Dorsolateral prefrontal cortex (tissue), 120 donors: ENCODE measurements at regions of chr14 and their contacts with region 1.

Region 1: DNA sequence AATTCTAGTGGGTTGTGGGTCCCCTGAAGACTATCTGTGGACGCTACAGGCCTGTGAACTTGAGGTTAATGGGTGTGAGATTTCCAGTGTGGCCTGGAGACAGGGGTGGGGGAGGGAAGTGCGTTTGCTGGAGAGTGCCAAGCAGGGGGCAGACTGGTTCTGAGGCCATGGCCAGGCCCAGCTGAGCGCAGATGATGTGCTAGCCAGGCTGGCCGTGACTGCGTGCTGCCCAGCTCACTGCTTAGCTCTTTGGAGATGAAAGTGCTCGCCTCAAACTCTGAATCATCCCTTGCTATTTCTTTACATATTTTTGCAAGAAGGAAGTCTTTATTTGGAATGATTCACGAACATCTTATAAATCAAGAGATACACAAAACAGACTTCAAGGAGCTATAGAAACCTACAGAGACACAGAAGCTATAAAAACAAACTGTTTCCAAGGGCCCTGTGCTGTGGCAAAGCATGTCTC is 75.2 kb upstream of the PLEKHG3 start:
- DNase-seq: peak in 9 of 10 donors; percentile 57 to 73 (median 70)
- H3K4me3 ChIP-seq: peak overlapping the region in 1 of 59 donors; percentile 18
- H3K27ac ChIP-seq: peak overlapping the region in 48 of 59 donors; percentile 3 to 82 (median 55)
- H3K27me3 ChIP-seq: no peaks in the 10 kb centered on the region
- CTCF ChIP-seq: peak in 24 of 56 donors; percentile 7 to 62 (median 26)

Region 2: GRCh38 chr14:64531567-64531966 is 97.4 kb before region 1 on chr14:
- intact Hi-C with region 1: no loop called
- DNase-seq: no peak
- H3K4me3 ChIP-seq: no peak overlapping the region
- H3K27ac ChIP-seq: no peak overlapping the region
- H3K27me3 ChIP-seq: no peaks in the 10 kb centered on the region
- CTCF ChIP-seq: no peak

Region 3: GRCh38 chr14:64580467-64580866 is 48.5 kb before region 1 on chr14:
- intact Hi-C with region 1: loop called in 1 of 2 experiments (anchors 5 kb)
- DNase-seq: no peak
- H3K4me3 ChIP-seq: no peak overlapping the region
- H3K27ac ChIP-seq: no peak overlapping the region
- H3K27me3 ChIP-seq: no peaks in the 10 kb centered on the region
- CTCF ChIP-seq: no peak